Activated B cell treated with CpG ODN at 0.5 μM for 24 hours (primary cell): ENCODE measurements at regions of chr9 and their contacts with region 1.

Region 1: GRCh38 chr9:3525836-3526164 is at the start of gene RFX3:
- DNase-seq: no peak
- ATAC-seq: peak; percentile 61
- H3K4me3 Mint-ChIP-seq: peak within 1 kb of the TSS; percentile 97
- H3K27ac Mint-ChIP-seq: peak within 1 kb of the TSS; percentile 100
- H3K4me1 Mint-ChIP-seq: peaks cover 60% of the 10 kb centered on the region
- H3K27me3 Mint-ChIP-seq: no peaks in the 10 kb centered on the region
- CTCF ChIP-seq: no peak
- total RNA-seq, gene RFX3: 34.6 and 39.1 TPM in 2 replicates

Region 2: GRCh38 chr9:2014696-2015580 is 1510.9 kb before region 1 on chr9 and contains the start of gene SMARCA2:
- CTCF ChIA-PET with region 1: no interaction called
- POLR2A ChIA-PET with region 1: interaction called, 6 read pairs
- intact Hi-C with region 1: loop called (anchors 2 kb)
- DNase-seq: peak; percentile 94
- ATAC-seq: peak; percentile 82
- H3K4me3 Mint-ChIP-seq: peak within 1 kb of the TSS; percentile 99
- H3K27ac Mint-ChIP-seq: peak within 1 kb of the TSS; percentile 98
- H3K4me1 Mint-ChIP-seq: peaks cover 28% of the 10 kb centered on the region
- H3K27me3 Mint-ChIP-seq: peaks cover 8% of the 10 kb centered on the region
- CTCF ChIP-seq: no peak
- total RNA-seq, gene SMARCA2: 235 and 238 TPM in 2 replicates

Region 3: GRCh38 chr9:3398232-3398648 is 127.6 kb before region 1 on chr9:
- CTCF ChIA-PET with region 1: no interaction called
- POLR2A ChIA-PET with region 1: interaction called, 3 read pairs
- intact Hi-C with region 1: loop called (anchors 5 kb)
- DNase-seq: no peak
- ATAC-seq: peak; percentile 65
- H3K4me3 Mint-ChIP-seq: peak overlapping the region; percentile 79
- H3K27ac Mint-ChIP-seq: peak overlapping the region; percentile 88
- H3K4me1 Mint-ChIP-seq: peaks cover 32% of the 10 kb centered on the region
- H3K27me3 Mint-ChIP-seq: no peaks in the 10 kb centered on the region
- CTCF ChIP-seq: no peak

Region 4: DNA sequence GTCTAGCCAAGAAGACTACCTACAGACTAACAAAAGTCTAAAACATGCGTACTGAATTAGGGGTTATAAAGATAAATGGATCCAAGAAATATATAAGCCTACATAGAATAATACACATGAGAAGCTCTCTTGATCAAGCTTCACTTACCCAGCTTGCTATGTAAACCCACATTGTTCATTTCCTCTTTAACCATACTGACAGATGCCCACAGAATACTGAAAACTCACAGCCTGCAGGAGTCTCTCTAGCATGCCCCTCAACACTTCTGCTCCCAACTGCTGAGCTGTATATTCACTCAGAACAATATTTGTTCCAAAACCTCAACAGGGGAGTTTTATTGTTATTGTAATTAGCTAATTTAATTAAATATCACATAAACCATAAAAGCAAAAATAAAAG is 52.4 kb before region 1 on chr9:
- CTCF ChIA-PET with region 1: interaction called, 7 read pairs
- POLR2A ChIA-PET with region 1: interaction called, 309 read pairs
- intact Hi-C with region 1: loop called (anchors 1 kb)
- DNase-seq: no peak
- ATAC-seq: peak; percentile 75
- H3K4me3 Mint-ChIP-seq: peak overlapping the region; percentile 5
- H3K27ac Mint-ChIP-seq: peak overlapping the region; percentile 68
- H3K4me1 Mint-ChIP-seq: peaks cover 59% of the 10 kb centered on the region
- H3K27me3 Mint-ChIP-seq: no peaks in the 10 kb centered on the region
- CTCF ChIP-seq: no peak

Region 5: GRCh38 chr9:3508521-3509291 is 17.1 kb before region 1 on chr9:
- CTCF ChIA-PET with region 1: interaction called, 3 read pairs
- POLR2A ChIA-PET with region 1: interaction called, 162 read pairs
- intact Hi-C with region 1: loop called (anchors 1 kb)
- DNase-seq: no peak
- ATAC-seq: peak; percentile 53
- H3K4me3 Mint-ChIP-seq: peak overlapping the region; percentile 78
- H3K27ac Mint-ChIP-seq: peak overlapping the region; percentile 92
- H3K4me1 Mint-ChIP-seq: peaks cover 44% of the 10 kb centered on the region
- H3K27me3 Mint-ChIP-seq: no peaks in the 10 kb centered on the region
- CTCF ChIP-seq: no peak

Region 6: DNA sequence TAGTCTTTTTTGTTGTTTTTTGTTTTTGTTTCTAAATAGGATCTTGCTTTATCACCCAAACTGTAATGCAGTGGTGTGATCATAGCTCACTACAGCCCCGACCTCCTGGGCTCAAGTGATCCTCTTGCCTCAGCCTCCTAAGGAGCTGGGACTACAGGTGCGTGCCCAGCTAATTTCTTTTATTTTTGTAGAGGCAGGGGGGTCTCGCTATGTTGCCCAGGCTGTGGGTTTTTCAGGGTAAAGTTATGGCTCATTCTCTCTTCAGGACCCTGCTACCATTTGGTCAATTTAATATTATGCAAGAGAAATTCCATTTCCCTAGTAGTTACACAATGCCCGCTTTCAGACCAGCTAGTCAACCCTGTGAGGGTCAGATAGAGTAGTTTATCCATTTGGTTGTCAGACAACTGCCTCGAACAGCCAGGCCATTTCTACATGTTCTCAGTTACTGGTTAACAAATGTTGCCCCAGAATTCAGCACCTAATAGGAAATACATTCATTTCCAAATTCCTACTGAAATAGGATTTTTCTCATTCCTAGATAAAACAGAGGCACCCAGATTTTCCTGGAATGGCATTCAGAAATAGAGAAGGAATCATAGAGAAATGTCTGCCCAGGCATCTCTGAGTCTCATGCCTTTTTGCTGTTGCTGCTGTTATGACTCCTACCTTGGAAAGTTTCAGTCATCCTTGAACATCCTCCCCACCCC is 780.4 kb after region 1 on chr9:
- CTCF ChIA-PET with region 1: no interaction called
- POLR2A ChIA-PET with region 1: no interaction called
- intact Hi-C with region 1: no loop called
- DNase-seq: no peak
- ATAC-seq: no peak
- H3K4me3 Mint-ChIP-seq: no peak overlapping the region
- H3K27ac Mint-ChIP-seq: no peak overlapping the region
- H3K4me1 Mint-ChIP-seq: no peaks in the 10 kb centered on the region
- H3K27me3 Mint-ChIP-seq: peaks cover 16% of the 10 kb centered on the region
- CTCF ChIP-seq: no peak

Region 7: DNA sequence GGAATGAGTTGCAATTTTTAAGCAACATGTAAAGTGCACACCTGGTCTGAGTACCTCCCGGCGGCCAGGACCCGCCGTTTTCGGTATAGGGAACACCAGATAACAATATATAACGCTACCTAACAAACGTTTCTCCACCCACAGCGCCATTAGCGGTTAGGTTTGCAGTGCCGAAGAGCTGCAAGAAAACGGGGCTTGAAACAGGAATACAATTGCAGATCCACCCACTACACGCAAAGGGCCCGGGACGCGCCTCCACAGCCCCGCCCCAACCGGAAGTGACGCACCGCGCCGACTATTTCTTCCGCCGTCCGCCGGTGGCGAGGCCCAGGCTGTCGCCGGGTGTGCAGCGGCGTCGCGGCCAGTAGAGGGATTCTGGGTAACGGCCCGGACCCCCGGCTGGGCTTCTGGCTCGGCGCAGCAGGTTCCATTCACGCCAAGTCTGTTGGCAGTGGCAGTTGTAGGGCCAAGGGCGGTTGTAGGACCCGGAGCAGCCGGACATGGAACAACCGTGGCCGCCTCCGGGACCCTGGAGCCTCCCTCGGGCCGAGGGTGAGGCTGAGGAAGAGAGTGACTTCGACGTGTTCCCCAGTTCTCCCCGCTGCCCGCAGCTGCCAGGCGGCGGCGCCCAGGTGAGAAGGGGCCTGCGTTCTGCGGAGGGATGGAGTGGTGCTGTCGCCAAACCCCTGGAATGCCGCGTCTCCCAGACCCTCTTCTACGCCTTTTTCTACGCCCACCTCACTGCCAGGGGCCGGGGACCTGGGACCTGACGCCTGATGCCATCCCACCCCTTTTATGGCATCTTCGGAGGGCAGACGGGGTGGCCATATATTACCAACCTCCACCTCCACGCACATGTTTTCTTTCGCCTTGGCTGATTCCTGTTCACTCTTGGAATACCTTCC is 1153.7 kb after region 1 on chr9 and contains the start of gene CDC37L1:
- CTCF ChIA-PET with region 1: no interaction called
- POLR2A ChIA-PET with region 1: interaction called, 5 read pairs
- intact Hi-C with region 1: loop called (anchors 1 kb)
- DNase-seq: peak; percentile 100
- ATAC-seq: peak; percentile 95
- H3K4me3 Mint-ChIP-seq: no peak within 1 kb of the TSS
- H3K27ac Mint-ChIP-seq: no peak within 1 kb of the TSS
- H3K4me1 Mint-ChIP-seq: peaks cover 7% of the 10 kb centered on the region
- H3K27me3 Mint-ChIP-seq: no peaks in the 10 kb centered on the region
- CTCF ChIP-seq: no peak
- total RNA-seq, gene CDC37L1: 12.3 and 14.7 TPM in 2 replicates

Region 8: DNA sequence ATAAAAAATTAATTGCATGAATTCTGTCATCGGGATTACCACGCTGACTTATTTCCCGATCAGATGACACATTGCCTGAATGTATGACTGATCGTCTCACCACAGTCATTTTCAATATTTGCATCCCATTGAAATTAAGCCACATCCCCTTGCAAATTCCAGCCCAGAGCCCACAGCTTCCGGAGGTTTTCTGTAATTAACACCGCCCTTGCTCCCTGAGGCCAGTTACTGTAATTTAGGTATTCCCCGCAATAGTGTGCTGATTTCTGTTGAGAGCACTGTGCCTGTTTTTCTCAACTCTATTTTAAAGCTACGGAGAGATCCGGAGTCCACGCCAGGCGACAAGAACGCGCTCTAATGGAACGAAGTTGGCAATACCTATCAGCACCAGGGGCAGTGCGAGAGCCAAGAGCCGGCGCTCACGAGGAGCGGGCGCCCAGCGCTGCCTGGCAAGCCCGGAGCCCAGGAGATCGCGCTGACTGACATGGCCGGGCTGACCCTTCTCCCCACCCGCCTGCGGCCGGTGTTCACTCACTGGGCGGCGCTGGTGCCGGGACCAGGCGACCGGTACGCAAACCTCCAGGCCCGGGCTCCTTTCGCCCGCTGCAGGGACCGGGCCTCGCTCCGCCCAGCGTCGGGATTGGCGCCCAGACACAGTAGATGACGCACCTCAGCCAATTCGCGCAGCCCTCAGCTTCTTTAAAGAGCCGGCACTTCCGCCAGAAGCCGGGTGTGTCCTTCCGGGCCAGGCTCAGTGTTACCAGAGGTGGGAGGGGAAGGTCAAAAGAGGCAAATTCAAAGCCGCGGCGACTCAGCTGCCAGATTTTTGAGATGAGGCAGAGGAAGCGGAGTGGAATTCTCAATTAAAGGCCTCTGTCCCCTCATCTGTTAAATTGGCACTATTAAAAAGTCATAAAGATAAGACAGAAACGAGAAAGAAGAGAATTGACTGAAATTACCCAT is 1911.7 kb after region 1 on chr9 and contains the start of gene PLGRKT:
- CTCF ChIA-PET with region 1: no interaction called
- POLR2A ChIA-PET with region 1: interaction called, 5 read pairs
- intact Hi-C with region 1: loop called (anchors 5 kb)
- DNase-seq: peak; percentile 82
- ATAC-seq: peak; percentile 78
- H3K4me3 Mint-ChIP-seq: peak within 1 kb of the TSS; percentile 96
- H3K27ac Mint-ChIP-seq: peak within 1 kb of the TSS; percentile 100
- H3K4me1 Mint-ChIP-seq: peaks cover 59% of the 10 kb centered on the region
- H3K27me3 Mint-ChIP-seq: no peaks in the 10 kb centered on the region
- CTCF ChIP-seq: no peak
- total RNA-seq, gene PLGRKT: 57.1 and 59.7 TPM in 2 replicates